Activated naive CD4-positive, alpha-beta T cell treated with anti-CD3 and anti-CD28 coated beads for 36 hours (primary cell): ENCODE measurements at regions of chr6 and their contacts with region 1.

Region 1: GRCh38 chr6:43454696-43455530 is 435 bp downstream of the DLK2 start:
- DNase-seq: peak; percentile 27
- H3K4me3 Mint-ChIP-seq: peak overlapping the region; percentile 74
- H3K27ac Mint-ChIP-seq: no peak overlapping the region
- H3K4me1 Mint-ChIP-seq: peaks cover 8% of the 10 kb centered on the region
- H3K27me3 Mint-ChIP-seq: peaks cover 4% of the 10 kb centered on the region

Region 2: GRCh38 chr6:43355862-43356590 is 98.9 kb before region 1 on chr6:
- CTCF ChIA-PET with region 1: no interaction called
- intact Hi-C with region 1: no loop called
- DNase-seq: peak; percentile 23
- H3K4me3 Mint-ChIP-seq: no peak overlapping the region
- H3K27ac Mint-ChIP-seq: no peak overlapping the region
- H3K4me1 Mint-ChIP-seq: peaks cover 12% of the 10 kb centered on the region
- H3K27me3 Mint-ChIP-seq: no peaks in the 10 kb centered on the region

Region 3: DNA sequence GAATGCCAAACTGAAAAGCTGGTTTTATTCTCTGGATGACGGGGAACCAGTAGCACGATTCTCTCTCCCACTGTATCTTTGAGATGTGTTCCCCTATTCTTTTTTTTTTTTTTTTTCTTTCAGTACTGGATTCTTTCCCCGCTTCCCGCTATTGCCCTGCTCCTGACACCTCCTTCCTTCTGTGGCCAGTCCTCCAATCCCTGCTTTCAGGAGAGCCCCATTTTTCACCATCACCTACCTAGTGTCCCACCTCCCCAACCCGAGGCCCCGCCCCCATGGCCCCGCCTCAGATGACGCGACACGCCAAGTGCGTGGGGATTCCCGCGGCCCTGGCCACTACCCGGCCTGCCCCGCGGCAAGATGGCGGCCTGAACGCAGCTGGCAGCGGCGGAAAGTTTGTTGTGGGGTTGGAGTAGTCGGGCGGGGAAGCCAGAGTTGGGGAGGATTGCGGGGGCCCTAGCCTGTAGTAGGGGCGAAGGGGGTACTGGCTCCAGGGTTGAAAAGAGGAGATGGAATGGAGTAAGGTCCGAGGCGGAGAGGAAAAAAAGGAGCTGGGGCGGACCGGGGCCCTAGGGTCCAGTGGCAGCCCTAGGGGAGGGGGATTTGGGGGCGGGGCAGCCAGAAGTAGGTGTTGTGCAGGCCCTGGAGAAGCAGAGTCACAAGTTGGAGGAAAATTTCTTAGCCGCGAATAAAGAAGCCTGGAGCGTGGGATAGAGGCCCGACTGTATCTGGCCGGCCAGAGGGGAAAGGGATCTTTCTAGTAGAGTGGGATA is 22.5 kb after region 1 on chr6 and contains the start of gene TJAP1:
- CTCF ChIA-PET with region 1: interaction called, 3 read pairs
- intact Hi-C with region 1: loop called (anchors 1 kb)
- DNase-seq: peak; percentile 98
- H3K4me3 Mint-ChIP-seq: peak within 1 kb of the TSS; percentile 87
- H3K27ac Mint-ChIP-seq: peak within 1 kb of the TSS; percentile 67
- H3K4me1 Mint-ChIP-seq: peaks cover 45% of the 10 kb centered on the region
- H3K27me3 Mint-ChIP-seq: no peaks in the 10 kb centered on the region
- total RNA-seq, gene TJAP1: 23.0 to 24.6 TPM

Region 4: GRCh38 chr6:43496370-43497128 is 41.6 kb after region 1 on chr6:
- CTCF ChIA-PET with region 1: interaction called, 6 read pairs
- intact Hi-C with region 1: loop called (anchors 2 kb)
- DNase-seq: no peak
- H3K4me3 Mint-ChIP-seq: no peak overlapping the region
- H3K27ac Mint-ChIP-seq: no peak overlapping the region
- H3K4me1 Mint-ChIP-seq: peaks cover 17% of the 10 kb centered on the region
- H3K27me3 Mint-ChIP-seq: no peaks in the 10 kb centered on the region